Activated naive CD4-positive, alpha-beta T cell treated with anti-CD3 and anti-CD28 coated beads for 36 hours (primary cell): ENCODE measurements at regions of chr14 and their contacts with region 1.

Region 1: DNA sequence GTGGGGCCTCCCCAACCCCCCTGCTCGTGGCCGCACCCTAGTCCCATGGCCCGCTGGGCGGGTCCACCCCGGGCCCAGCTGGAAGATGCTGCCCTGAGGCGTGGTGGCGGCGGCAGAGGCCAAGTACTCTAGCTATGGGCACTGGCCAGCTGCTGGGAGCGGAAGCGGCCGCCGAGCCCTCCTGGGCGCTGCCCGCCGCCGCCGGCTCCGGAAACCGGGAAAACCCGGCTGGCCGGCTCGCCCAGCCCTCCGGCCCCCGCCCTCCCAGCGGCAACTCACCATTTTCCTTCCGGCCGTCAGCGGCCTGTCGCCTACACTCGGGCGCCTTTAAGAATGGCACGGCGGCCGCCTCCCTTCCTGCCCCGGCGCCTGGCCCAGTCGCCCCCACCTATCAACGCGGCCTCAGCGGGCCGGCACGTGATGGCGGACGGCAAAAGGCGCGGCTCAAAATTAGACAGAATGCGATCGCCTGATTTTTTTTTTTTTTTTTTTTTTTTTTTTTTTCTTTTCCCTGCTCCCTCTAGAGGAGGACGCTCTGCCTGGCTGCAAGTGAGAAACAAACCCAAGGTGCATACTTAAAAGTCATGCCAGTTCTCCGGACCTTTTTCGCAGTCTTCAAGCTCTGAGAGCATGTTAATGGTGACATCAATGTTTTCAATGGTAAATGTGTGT is at the start of gene GMFB:
- DNase-seq: peak; percentile 91
- H3K4me3 Mint-ChIP-seq: peak within 1 kb of the TSS; percentile 85
- H3K27ac Mint-ChIP-seq: peak within 1 kb of the TSS; percentile 88
- H3K4me1 Mint-ChIP-seq: peaks cover 54% of the 10 kb centered on the region
- H3K27me3 Mint-ChIP-seq: no peaks in the 10 kb centered on the region
- total RNA-seq, gene GMFB: 29.5 to 33.4 TPM

Region 2: DNA sequence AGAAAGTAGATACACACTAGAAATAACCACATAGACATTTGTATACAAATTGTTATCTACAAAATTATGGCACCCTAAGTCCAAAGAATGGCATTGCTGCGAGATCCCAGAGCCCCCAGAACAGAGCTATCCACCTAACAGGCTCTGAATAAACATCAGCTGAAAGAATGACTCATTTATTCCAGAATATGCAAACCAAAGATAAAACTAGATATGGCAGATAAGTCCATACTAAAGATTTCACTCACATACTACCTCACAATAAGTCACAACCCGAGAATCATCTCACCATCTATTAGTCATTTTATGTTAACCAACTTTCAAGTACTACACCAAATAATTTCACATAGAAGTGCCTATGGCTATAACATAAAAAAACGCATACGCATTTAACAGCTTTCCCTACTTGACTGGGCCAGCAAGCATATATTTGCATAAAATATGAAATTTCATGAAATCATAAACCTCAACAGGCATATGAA is 53.2 kb before region 1 on chr14:
- CTCF ChIA-PET with region 1: no interaction called
- intact Hi-C with region 1: no loop called
- DNase-seq: peak; percentile 16
- H3K4me3 Mint-ChIP-seq: peak overlapping the region; percentile 3
- H3K27ac Mint-ChIP-seq: peak overlapping the region; percentile 80
- H3K4me1 Mint-ChIP-seq: peaks cover 81% of the 10 kb centered on the region
- H3K27me3 Mint-ChIP-seq: no peaks in the 10 kb centered on the region

Region 3: DNA sequence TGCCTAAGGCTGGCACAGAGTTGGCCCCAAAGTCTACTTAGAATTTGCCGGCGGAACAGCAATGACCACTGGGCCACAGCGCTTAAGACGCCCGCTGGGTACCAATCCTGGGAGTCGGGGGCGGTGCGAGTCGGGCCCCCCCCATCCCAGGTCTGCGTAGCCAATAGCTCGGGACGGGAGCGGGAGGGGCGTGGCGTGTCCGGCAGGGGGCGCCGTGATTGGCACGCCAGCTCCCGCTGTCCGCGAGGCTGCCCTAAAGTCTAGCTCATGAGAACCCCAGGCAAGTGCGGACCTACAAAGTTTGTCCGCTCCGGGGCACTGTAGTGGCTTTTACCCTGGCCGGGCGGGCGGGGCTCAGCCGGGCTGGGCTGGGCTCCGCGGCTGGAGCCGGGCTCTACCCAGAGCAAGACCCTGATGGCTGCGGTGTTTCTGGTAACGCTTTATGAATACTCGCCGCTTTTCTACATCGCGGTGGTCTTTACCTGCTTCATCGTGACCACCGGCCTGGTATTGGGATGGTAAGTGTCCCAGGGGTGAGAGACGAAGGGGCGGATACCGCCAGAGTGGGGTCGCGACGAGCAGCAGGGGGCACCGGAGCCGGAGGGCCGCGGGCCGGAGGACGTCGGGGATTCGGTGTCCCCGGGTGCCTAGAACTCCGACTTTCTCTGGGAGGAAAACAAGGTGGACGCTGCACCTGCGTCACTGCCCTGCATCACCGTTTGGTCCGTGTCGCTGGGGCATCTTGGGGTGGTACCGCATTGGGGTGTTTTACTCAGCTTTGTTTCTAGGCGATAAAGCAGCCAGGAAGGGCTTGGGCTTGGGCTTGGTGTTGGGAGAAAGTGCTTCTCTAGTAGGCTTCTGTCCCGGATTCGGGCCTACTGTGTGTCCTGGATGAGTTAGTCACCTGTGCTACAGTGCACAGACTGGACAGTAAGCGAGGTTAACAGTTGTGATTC is 21.0 kb after region 1 on chr14 and contains the start of gene CGRRF1:
- CTCF ChIA-PET with region 1: interaction called, 13 read pairs
- intact Hi-C with region 1: loop called (anchors 1 kb)
- DNase-seq: peak; percentile 98
- H3K4me3 Mint-ChIP-seq: peak within 1 kb of the TSS; percentile 86
- H3K27ac Mint-ChIP-seq: peak within 1 kb of the TSS; percentile 52
- H3K4me1 Mint-ChIP-seq: peaks cover 41% of the 10 kb centered on the region
- H3K27me3 Mint-ChIP-seq: no peaks in the 10 kb centered on the region
- total RNA-seq, gene CGRRF1: 9.2 to 9.7 TPM

Region 4: DNA sequence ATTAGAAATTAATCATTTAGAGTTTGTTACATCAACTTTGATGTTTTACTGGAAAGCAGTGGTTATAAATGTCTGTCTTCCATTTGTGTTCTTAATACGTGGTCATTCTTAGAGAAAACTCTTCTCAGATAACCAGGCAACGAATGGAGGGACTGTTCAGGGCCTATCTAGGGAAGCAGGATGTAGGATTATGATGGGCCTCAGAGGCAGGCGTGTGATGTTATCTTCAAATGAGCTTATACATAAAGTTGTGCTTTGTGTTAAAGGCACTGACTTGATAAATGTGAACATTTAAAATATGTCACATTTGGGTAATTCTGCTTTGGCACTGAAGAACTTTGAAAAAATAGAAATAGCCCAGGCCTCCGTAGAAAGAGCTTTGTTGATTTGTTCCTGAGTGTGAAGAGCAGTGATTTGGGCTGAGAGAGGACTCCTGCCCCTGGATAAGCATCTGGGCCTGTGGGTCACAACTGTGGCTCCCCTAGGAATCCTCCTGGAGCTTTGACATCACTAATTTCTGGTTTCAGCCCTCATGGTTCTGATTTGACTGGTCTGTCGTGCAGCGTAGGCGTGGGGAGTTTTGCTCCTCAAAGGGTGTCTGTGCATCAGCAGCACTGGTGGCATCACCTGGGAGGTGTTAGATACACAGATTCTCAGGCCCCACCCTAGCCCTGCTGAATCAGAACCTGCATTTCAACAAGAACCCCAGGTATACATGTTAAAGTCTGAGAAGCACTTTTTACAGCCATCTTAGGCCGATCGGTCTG is 133.6 kb after region 1 on chr14:
- CTCF ChIA-PET with region 1: no interaction called
- intact Hi-C with region 1: no loop called
- DNase-seq: peak; percentile 86
- H3K4me3 Mint-ChIP-seq: no peak overlapping the region
- H3K27ac Mint-ChIP-seq: no peak overlapping the region
- H3K4me1 Mint-ChIP-seq: peaks cover 41% of the 10 kb centered on the region
- H3K27me3 Mint-ChIP-seq: no peaks in the 10 kb centered on the region